ENCODE measurements at regions of chr9 and their contacts with region 1.

Region 1: DNA sequence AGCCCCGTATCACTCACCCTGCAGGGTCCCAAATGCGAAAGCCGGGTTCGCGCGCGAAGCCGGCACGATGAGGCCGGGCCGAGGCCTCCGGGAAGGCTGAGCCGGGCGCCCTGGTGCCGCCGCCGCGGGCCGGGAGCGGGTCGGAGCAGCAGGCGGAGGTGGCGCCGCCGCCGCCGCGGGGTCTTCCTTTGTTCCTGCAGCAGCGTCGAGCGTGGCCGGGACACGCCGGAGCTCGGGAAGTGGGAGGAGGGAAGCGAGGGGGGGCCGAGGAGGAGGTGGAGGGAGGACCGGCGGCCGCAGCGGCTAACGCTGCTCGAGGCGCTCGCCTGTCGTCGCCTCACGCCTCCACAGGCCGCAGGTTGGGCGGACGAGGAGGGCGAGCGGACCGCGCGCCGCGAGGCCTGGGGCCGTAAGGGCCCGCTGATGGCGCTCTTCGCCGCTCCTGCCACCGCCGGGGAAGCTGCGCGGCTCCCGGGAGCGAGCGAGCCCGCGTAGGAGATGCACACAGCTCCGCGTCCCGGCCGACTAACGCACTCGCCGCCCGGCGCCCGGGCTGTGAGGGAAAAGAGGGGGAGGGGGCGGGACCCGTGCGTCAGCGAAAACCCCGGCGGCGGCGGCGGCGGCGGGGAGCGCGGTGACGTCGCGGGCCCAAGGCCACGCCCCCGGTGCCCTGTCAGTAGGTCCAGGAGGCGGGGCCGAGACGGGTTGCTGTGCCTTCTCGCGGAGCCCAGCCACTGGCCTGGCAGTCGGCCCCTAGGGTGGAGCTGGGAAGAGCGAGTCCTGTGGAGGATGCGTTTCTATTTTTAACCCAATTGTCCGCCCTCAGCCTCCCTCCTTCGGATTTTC is at the start of gene ZFAND5:
- DNase-seq: peak; percentile 90 to 94
- H3K4me3 ChIP-seq: peak within 1 kb of the TSS; percentile 84 to 99 (median 96)
- H3K27ac ChIP-seq: peak within 1 kb of the TSS; percentile 93
- H3K4me1 ChIP-seq: peaks cover 0 to 8% (median 0%) of the 10 kb centered on the region in 4 experiments; a peak in 4 of 7 replicates
- H3K27me3 ChIP-seq: no peaks in the 10 kb centered on the region
- CTCF ChIP-seq: no peak; a peak in 1 of 4 replicates
- EP300 ChIP-seq: peak; percentile 49 to 55; a peak in 2 of 3 replicates
- POLR2A ChIP-seq: peak; percentile 99 to 100
- RAD21 ChIP-seq: peak in 1 of 2 experiments; percentile 8; a peak in 3 of 4 replicates
- total RNA-seq, gene ZFAND5: 209 and 225 TPM in 2 replicates

Region 2: DNA sequence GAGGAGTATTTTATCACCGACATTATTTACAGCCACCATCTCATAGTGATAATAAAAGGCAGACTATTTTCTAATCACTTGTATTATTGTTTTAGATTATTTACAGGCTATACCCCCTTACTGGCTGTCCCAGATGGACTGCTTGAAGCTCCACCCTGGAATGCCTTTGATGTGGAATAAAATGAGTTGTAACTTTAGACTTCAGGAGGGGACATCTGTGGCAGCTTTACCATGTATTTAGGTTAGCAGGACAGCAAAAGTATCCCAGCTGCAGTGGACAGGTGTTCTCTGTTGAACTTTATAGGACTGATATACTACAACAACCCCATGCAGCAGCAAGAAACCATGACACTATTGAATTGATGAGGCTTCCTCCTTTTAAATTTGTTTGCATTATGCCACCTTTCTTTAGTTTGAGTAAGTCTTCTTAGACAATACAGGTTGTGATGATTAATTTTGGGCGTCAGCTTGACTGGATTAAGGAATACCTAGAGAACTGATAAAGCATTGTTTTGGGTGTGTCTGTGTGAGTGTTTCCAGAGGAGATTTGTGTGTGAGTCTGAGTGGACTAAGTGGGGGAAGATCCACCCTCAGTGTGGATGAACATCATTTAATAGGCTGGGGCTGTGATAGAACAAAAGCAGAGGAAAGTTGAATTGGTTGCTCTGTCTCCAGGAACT is 275.3 kb before region 1 on chr9:
- CTCF ChIA-PET with region 1: no interaction called
- POLR2A ChIA-PET with region 1: no interaction called
- DNase-seq: no peak
- H3K4me3 ChIP-seq: no peak overlapping the region
- H3K27ac ChIP-seq: no peak overlapping the region
- H3K4me1 ChIP-seq: no peaks in the 10 kb centered on the region
- H3K27me3 ChIP-seq: no peaks in the 10 kb centered on the region
- CTCF ChIP-seq: no peak
- EP300 ChIP-seq: no peak
- POLR2A ChIP-seq: no peak
- RAD21 ChIP-seq: no peak

Region 3: DNA sequence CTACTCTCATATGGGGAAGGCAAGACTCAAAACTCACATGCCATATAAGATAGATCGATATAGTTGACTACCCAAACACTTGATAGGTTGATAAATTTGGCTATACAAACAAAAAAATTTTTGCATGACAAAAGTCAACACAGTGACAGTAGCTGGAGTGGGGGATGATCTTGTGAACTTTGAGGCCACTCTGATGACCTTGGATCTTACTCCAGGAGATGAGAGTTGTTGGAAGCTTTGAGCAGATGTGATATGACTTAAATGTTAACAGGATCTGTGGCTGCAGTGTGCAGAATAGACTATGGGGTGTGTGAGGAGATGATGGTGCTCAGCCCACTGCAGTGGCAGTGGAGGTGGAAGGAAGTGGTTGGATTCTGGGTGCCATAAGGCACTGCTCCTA is 101.3 kb before region 1 on chr9:
- CTCF ChIA-PET with region 1: no interaction called
- POLR2A ChIA-PET with region 1: no interaction called
- DNase-seq: no peak
- H3K4me3 ChIP-seq: no peak overlapping the region
- H3K27ac ChIP-seq: no peak overlapping the region
- H3K4me1 ChIP-seq: no peaks in the 10 kb centered on the region
- H3K27me3 ChIP-seq: no peaks in the 10 kb centered on the region
- CTCF ChIP-seq: no peak
- EP300 ChIP-seq: no peak
- POLR2A ChIP-seq: no peak
- RAD21 ChIP-seq: no peak

Region 4: GRCh38 chr9:72334658-72335337 is 30.1 kb before region 1 on chr9:
- CTCF ChIA-PET with region 1: interaction called, 3 read pairs
- POLR2A ChIA-PET with region 1: interaction called, 13 read pairs
- DNase-seq: no peak
- H3K4me3 ChIP-seq: no peak overlapping the region
- H3K27ac ChIP-seq: no peak overlapping the region
- H3K4me1 ChIP-seq: no peaks in the 10 kb centered on the region
- H3K27me3 ChIP-seq: no peaks in the 10 kb centered on the region
- CTCF ChIP-seq: no peak
- EP300 ChIP-seq: no peak
- POLR2A ChIP-seq: no peak
- RAD21 ChIP-seq: no peak

Region 5: DNA sequence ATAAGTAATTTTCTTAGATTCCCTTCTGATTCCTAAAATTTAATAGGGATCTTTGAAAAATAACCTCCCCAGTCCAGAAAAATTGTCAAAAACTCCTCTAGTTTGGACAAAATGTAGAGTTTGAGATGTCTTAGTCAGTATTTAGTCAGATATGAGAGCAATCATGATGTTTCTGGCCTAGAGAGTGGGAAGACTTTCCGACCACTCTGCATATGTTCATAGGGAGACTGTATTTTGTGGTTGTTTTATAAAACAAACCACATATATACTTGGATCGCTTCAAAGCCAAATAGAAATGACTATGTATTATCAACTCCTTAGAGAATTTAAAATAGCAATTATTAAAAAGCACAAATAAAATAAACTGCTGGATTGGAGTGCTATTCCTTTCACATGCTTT is 15.7 kb before region 1 on chr9:
- CTCF ChIA-PET with region 1: interaction called, 3 read pairs
- POLR2A ChIA-PET with region 1: interaction called, 37 read pairs
- DNase-seq: no peak
- H3K4me3 ChIP-seq: no peak overlapping the region
- H3K27ac ChIP-seq: no peak overlapping the region
- H3K4me1 ChIP-seq: no peaks in the 10 kb centered on the region; a peak in 1 of 7 replicates
- H3K27me3 ChIP-seq: no peaks in the 10 kb centered on the region
- CTCF ChIP-seq: no peak
- EP300 ChIP-seq: no peak
- POLR2A ChIP-seq: no peak
- RAD21 ChIP-seq: no peak

Region 6: GRCh38 chr9:72377041-72377440 is 12.1 kb after region 1 on chr9:
- CTCF ChIA-PET with region 1: interaction called, 4 read pairs
- POLR2A ChIA-PET with region 1: interaction called, 20 read pairs
- DNase-seq: no peak
- H3K4me3 ChIP-seq: no peak overlapping the region
- H3K27ac ChIP-seq: no peak overlapping the region
- H3K4me1 ChIP-seq: no peaks in the 10 kb centered on the region; a peak in 1 of 7 replicates
- H3K27me3 ChIP-seq: no peaks in the 10 kb centered on the region
- CTCF ChIP-seq: no peak
- EP300 ChIP-seq: no peak
- POLR2A ChIP-seq: no peak
- RAD21 ChIP-seq: no peak

Region 7: GRCh38 chr9:72382405-72382804 is 17.5 kb after region 1 on chr9:
- CTCF ChIA-PET with region 1: interaction called, 4 read pairs
- POLR2A ChIA-PET with region 1: interaction called, 16 read pairs
- DNase-seq: no peak
- H3K4me3 ChIP-seq: no peak overlapping the region
- H3K27ac ChIP-seq: no peak overlapping the region
- H3K4me1 ChIP-seq: no peaks in the 10 kb centered on the region; a peak in 1 of 7 replicates
- H3K27me3 ChIP-seq: no peaks in the 10 kb centered on the region
- CTCF ChIP-seq: no peak
- EP300 ChIP-seq: no peak
- POLR2A ChIP-seq: no peak
- RAD21 ChIP-seq: no peak

Region 8: GRCh38 chr9:72394066-72394465 is 29.2 kb after region 1 on chr9:
- CTCF ChIA-PET with region 1: interaction called, 3 read pairs
- POLR2A ChIA-PET with region 1: interaction called, 12 read pairs
- DNase-seq: no peak
- H3K4me3 ChIP-seq: no peak overlapping the region
- H3K27ac ChIP-seq: no peak overlapping the region
- H3K4me1 ChIP-seq: no peaks in the 10 kb centered on the region; a peak in 1 of 7 replicates
- H3K27me3 ChIP-seq: no peaks in the 10 kb centered on the region
- CTCF ChIP-seq: no peak
- EP300 ChIP-seq: no peak
- POLR2A ChIP-seq: no peak
- RAD21 ChIP-seq: no peak

Region 9: GRCh38 chr9:72592502-72593403 is 227.9 kb after region 1 on chr9:
- CTCF ChIA-PET with region 1: interaction called, 4 read pairs
- POLR2A ChIA-PET with region 1: interaction called, 16 read pairs
- DNase-seq: peak in 1 of 2 experiments; percentile 46
- H3K4me3 ChIP-seq: no peak overlapping the region
- H3K27ac ChIP-seq: no peak overlapping the region
- H3K4me1 ChIP-seq: peaks cover 0 to 4% (median 0%) of the 10 kb centered on the region in 4 experiments; a peak in 2 of 7 replicates
- H3K27me3 ChIP-seq: no peaks in the 10 kb centered on the region
- CTCF ChIP-seq: peak in 2 of 3 experiments; percentile 59 to 68; a peak in 3 of 4 replicates
- EP300 ChIP-seq: no peak
- POLR2A ChIP-seq: no peak
- RAD21 ChIP-seq: peak; percentile 82 to 84

Measured in H1 (cell line).